ENCODE measurements at regions of chrX and their contacts with region 1.

Region 1: DNA sequence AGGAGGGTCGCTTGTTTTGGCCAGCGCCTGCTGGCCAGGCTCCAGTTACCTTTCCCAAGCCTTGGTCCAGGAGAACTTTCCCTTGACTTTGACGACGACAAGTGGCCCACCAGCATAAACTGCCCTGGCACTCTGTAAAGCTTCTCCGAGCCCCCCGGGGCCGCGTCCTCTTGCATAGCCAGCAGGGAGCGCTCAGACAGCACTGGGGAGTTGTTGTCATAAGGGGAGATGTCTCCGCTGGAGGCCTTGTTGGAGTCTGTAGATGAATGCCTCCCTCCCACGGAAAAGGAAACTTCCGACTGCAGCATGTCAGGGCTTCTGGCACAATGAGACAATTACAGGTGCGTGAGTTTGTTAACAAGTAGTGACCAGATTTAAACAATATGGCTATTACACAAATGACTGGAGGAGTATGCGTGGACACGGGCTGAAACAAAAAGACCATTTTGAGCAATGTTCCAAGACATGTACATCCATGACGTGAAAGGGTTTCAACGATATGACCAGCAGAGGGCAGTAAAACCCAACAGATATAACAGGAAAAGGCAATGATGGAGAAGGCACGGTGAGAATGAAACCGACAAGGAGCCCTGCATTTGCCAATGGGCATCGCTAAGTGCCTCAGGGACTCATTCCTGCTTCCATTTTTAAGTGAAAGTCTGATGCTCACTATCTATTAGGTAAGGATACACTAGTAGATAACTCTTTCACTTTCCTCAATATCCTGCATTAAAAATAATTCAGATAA is 33.0 kb downstream of the HCCS start:
- DNase-seq: no peak
- H3K4me3 ChIP-seq: no peak overlapping the region
- H3K27ac ChIP-seq: no peak overlapping the region
- H3K4me1 ChIP-seq: no peaks in the 10 kb centered on the region
- H3K27me3 ChIP-seq: no peaks in the 10 kb centered on the region
- CTCF ChIP-seq: peak; percentile 41 to 72 (median 56)
- POLR2A ChIP-seq: no peak

Region 2: GRCh38 chrX:11533211-11533651 is 389.1 kb after region 1 on chrX:
- intact Hi-C with region 1: loop called (anchors 5 kb)
- DNase-seq: no peak
- H3K4me3 ChIP-seq: no peak overlapping the region
- H3K27ac ChIP-seq: no peak overlapping the region
- H3K4me1 ChIP-seq: no peaks in the 10 kb centered on the region
- H3K27me3 ChIP-seq: no peaks in the 10 kb centered on the region
- CTCF ChIP-seq: peak; percentile 89 to 96 (median 96)
- POLR2A ChIP-seq: no peak

Region 3: DNA sequence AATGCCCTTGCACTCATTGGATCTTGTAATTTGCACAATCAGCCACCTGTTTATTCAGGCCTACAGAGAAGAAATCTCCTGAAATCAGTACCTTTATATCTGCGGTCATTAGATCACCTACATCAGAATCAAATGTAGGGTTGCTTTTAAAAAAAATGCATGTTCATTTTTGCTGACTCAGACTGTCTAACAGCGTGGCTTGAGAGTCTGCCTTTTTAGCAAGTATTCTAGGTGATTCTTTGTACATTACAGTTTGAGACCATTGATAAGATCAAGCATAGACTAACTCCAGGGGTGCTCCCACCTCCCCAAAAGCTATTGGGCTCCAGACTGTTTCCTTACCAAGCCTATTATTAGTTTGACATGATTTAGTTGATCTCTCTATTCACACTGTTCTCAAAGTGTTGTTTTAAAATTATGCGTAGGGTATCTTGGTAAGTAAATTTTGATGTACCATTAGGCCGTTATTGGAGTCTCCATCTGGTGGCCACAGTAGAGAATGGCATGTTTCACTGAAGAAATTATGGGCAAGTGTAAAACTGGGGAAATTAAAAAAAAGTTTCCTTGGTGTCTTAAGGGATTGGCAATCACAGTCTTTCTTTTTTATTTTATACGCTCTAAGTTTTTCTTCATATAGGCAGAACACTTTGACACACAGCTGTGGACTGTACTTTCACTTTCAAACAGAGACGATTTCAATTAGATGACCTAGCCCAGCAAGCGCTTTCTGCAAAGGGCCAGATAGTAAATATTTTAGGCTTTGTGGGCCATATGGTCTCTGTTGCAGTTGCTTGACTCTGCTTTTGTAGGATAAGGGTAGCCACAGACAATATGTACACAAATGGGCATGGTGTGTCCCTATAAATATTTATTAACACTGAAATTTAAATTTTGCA is 580.3 kb after region 1 on chrX:
- intact Hi-C with region 1: loop called (anchors 10 kb)
- DNase-seq: no peak
- H3K4me3 ChIP-seq: no peak overlapping the region
- H3K27ac ChIP-seq: no peak overlapping the region
- H3K4me1 ChIP-seq: no peaks in the 10 kb centered on the region
- H3K27me3 ChIP-seq: no peaks in the 10 kb centered on the region
- CTCF ChIP-seq: peak in 2 of 3 experiments; percentile 31 to 61
- POLR2A ChIP-seq: no peak

Measured in vagina (tissue), 2 donors.